T-cell (primary cell): ENCODE measurements at regions of chr12 and their contacts with region 1.

Region 1: GRCh38 chr12:6140651-6141447 is 16.4 kb upstream of the VWF start:
- DNase-seq: peak in 32 of 35 experiments; percentile 3 to 69 (median 30)
- ATAC-seq: peak; percentile 85 to 97 (median 93)
- H3K4me3 ChIP-seq: peak overlapping the region in 1 of 2 donors; percentile 32
- H3K4me3 Mint-ChIP-seq: peak overlapping the region; percentile 53 to 67 (median 56)
- H3K27ac ChIP-seq: peak overlapping the region; percentile 69
- H3K27ac Mint-ChIP-seq: peak overlapping the region; percentile 98 to 99
- H3K4me1 ChIP-seq: peaks cover 32 to 61% of the 10 kb centered on the region in 2 experiments
- H3K4me1 Mint-ChIP-seq: peaks cover 47 to 49% (median 48%) of the 10 kb centered on the region in 3 donors
- H3K27me3 ChIP-seq: peaks cover 0 to 8% of the 10 kb centered on the region in 2 experiments
- H3K27me3 Mint-ChIP-seq: peaks cover 0 to 1% of the 10 kb centered on the region in 2 donors

Region 2: GRCh38 chr12:5977556-5977955 is 163.3 kb before region 1 on chr12:
- CTCF ChIA-PET with region 1: no interaction called
- POLR2A ChIA-PET with region 1: interaction called in 1 of 2 experiments, 15 read pairs
- DNase-seq: no peak
- ATAC-seq: peak in 1 of 4 experiments; percentile 26
- H3K4me3 ChIP-seq: no peak overlapping the region
- H3K4me3 Mint-ChIP-seq: no peak overlapping the region
- H3K27ac ChIP-seq: no peak overlapping the region
- H3K27ac Mint-ChIP-seq: no peak overlapping the region
- H3K4me1 ChIP-seq: no peaks in the 10 kb centered on the region
- H3K4me1 Mint-ChIP-seq: no peaks in the 10 kb centered on the region
- H3K27me3 ChIP-seq: peaks cover 0 to 14% of the 10 kb centered on the region in 2 experiments
- H3K27me3 Mint-ChIP-seq: peaks cover 20 to 30% of the 10 kb centered on the region in 2 donors

Region 3: GRCh38 chr12:6062757-6063735 is 77.8 kb before region 1 on chr12:
- CTCF ChIA-PET with region 1: no interaction called
- POLR2A ChIA-PET with region 1: no interaction called
- DNase-seq: peak in 34 of 35 experiments; percentile 25 to 74 (median 53)
- ATAC-seq: peak; percentile 83 to 91 (median 87)
- H3K4me3 ChIP-seq: no peak overlapping the region
- H3K4me3 Mint-ChIP-seq: no peak overlapping the region
- H3K27ac ChIP-seq: no peak overlapping the region
- H3K27ac Mint-ChIP-seq: peak overlapping the region in 1 of 2 donors; percentile 11
- H3K4me1 ChIP-seq: peaks cover 0 to 3% of the 10 kb centered on the region in 2 experiments
- H3K4me1 Mint-ChIP-seq: peaks cover under 1 to 8% (median 4%) of the 10 kb centered on the region in 3 donors
- H3K27me3 ChIP-seq: peaks cover 0 to 57% of the 10 kb centered on the region in 2 experiments
- H3K27me3 Mint-ChIP-seq: peaks cover 0 to 14% of the 10 kb centered on the region in 2 donors

Region 4: GRCh38 chr12:6124411-6125309 is 16.2 kb before region 1 on chr12 and contains the start of gene VWF:
- CTCF ChIA-PET with region 1: no interaction called
- POLR2A ChIA-PET with region 1: no interaction called
- DNase-seq: no peak
- ATAC-seq: no peak
- H3K4me3 ChIP-seq: no peak within 1 kb of the TSS
- H3K4me3 Mint-ChIP-seq: no peak within 1 kb of the TSS
- H3K27ac ChIP-seq: no peak within 1 kb of the TSS
- H3K27ac Mint-ChIP-seq: no peak within 1 kb of the TSS
- H3K4me1 ChIP-seq: no peaks in the 10 kb centered on the region
- H3K4me1 Mint-ChIP-seq: no peaks in the 10 kb centered on the region
- H3K27me3 ChIP-seq: peaks cover 0 to 18% of the 10 kb centered on the region in 2 experiments
- H3K27me3 Mint-ChIP-seq: peaks cover 0 to 7% of the 10 kb centered on the region in 2 donors
- total RNA-seq, gene VWF: 0.13 to 0.90 (median 0.74) TPM in 4 of 5 donors, not detected in the other